Mammary epithelial cell (primary cell): ENCODE measurements at regions of chr15 and their contacts with region 1.

Region 1: GRCh38 chr15:92277776-92278175 is 115.9 kb upstream of the ST8SIA2 start:
- DNase-seq: peak; percentile 37
- H3K4me3 ChIP-seq: no peak overlapping the region
- H3K27ac ChIP-seq: no peak overlapping the region
- H3K4me1 ChIP-seq: no peaks in the 10 kb centered on the region
- H3K27me3 ChIP-seq: no peaks in the 10 kb centered on the region
- CTCF ChIP-seq: peak; percentile 33 to 60

Region 2: DNA sequence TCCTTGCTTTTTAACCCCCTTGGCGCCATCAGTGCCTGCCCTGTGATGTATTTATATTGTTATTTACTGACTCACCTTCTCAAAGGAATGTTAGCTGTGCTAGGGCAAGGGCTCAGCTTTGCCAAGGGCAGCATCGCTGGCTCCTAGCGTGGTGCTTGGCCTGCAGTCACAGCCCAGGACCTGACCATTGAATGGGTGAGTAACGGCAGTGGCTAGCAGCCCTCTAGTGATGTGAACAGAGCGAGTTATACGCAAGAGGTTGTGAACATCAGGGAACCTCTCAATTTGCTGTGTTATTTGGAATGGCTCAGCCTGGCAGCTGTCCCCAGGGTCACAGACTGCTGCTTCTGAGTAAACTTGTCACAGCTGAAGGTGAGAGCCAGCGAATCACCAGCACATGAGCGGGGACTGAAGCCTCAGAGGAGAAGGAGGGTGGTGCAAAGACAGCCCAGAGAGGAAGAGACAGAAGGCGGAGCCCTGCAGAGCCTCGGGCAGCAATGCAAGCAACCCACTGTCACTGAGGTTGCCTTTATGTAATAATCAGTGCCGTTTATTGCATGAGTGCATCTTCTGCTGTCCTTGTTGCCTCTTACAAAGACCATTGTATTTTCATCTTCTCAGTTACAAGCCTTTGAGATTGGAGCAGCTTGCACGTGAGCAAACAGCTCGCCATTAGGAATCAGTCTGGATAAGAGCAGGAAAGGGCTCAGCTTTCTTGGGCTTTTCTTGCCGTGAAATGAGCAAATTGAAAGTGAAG is 266.0 kb before region 1 on chr15:
- CTCF ChIA-PET with region 1: no interaction called
- dilution Hi-C with region 1: no loop called
- in situ Hi-C with region 1: no loop called
- intact Hi-C with region 1: no loop called
- DNase-seq: peak; percentile 65
- H3K4me3 ChIP-seq: peak overlapping the region in 1 of 3 experiments; percentile 1
- H3K27ac ChIP-seq: no peak overlapping the region
- H3K4me1 ChIP-seq: peaks cover 24% of the 10 kb centered on the region
- H3K27me3 ChIP-seq: no peaks in the 10 kb centered on the region
- CTCF ChIP-seq: no peak

Region 3: DNA sequence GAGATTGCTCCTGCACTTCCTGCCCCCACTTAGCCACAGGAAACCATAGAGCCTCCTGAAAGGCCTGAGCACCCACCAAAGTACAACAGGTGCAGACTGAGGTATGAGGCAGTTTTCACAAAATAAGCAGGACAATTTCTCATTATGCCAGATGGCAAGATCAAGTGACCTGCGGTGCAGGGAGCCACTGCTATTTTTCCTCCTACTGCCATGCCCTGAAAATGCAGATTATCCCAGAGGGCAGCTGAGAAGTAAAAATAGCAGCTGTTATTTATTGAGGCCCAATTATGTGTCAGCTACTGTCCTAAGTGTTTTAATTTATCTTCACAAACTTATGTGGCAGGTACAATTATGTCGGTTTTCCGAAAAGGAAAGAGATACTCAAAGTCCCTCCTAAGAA is 93.6 kb before region 1 on chr15:
- CTCF ChIA-PET with region 1: no interaction called
- dilution Hi-C with region 1: no loop called
- in situ Hi-C with region 1: loop called in 1 of 2 experiments (anchors 25 kb)
- intact Hi-C with region 1: no loop called
- DNase-seq: no peak
- H3K4me3 ChIP-seq: no peak overlapping the region
- H3K27ac ChIP-seq: no peak overlapping the region
- H3K4me1 ChIP-seq: no peaks in the 10 kb centered on the region
- H3K27me3 ChIP-seq: no peaks in the 10 kb centered on the region
- CTCF ChIP-seq: no peak

Region 4: GRCh38 chr15:92391640-92392039 is 113.9 kb after region 1 on chr15:
- CTCF ChIA-PET with region 1: no interaction called
- dilution Hi-C with region 1: no loop called
- in situ Hi-C with region 1: no loop called
- intact Hi-C with region 1: loop called (anchors 5 kb)
- DNase-seq: peak; percentile 53
- H3K4me3 ChIP-seq: no peak overlapping the region
- H3K27ac ChIP-seq: no peak overlapping the region
- H3K4me1 ChIP-seq: peaks cover 9% of the 10 kb centered on the region
- H3K27me3 ChIP-seq: peaks cover 27% of the 10 kb centered on the region
- CTCF ChIP-seq: peak; percentile 68 to 77